Naive thymus-derived CD4-positive, alpha-beta T cell (primary cell): ENCODE measurements at regions of chr3 and their contacts with region 1.

Region 1: DNA sequence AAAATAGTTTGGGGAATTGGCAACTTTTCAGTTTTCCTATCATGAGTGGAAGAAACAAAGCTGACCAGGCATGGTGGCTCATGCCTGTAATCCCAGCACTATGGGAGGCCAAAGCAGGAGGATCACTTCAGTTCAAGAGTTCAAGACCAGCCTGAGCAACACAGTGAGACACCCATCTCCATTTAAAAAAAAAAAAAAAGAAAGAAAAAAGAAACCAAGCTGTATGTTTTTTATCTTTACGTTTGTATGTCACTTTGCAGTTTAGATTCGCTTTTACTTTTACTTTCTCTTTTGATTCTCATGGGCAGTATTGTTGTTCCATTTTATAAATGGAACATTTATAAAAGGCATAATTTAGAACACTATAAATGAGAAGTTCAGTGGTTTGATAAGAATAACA is 31.2 kb upstream of the TNIK start:
- DNase-seq: peak in 6 of 9 donors; percentile 14 to 57 (median 36)
- ATAC-seq: peak; percentile 26
- H3K4me3 ChIP-seq: peak overlapping the region; percentile 10
- H3K4me3 Mint-ChIP-seq: peak overlapping the region; percentile 36 to 82 (median 74)
- H3K27ac ChIP-seq: no peak overlapping the region
- H3K27ac Mint-ChIP-seq: peak overlapping the region; percentile 79 to 90 (median 85)
- H3K4me1 ChIP-seq: peaks cover 32 to 38% of the 10 kb centered on the region in 2 donors
- H3K4me1 Mint-ChIP-seq: peaks cover 15 to 55% (median 48%) of the 10 kb centered on the region in 7 donors
- H3K27me3 ChIP-seq: no peaks in the 10 kb centered on the region
- H3K27me3 Mint-ChIP-seq: no peaks in the 10 kb centered on the region

Region 2: DNA sequence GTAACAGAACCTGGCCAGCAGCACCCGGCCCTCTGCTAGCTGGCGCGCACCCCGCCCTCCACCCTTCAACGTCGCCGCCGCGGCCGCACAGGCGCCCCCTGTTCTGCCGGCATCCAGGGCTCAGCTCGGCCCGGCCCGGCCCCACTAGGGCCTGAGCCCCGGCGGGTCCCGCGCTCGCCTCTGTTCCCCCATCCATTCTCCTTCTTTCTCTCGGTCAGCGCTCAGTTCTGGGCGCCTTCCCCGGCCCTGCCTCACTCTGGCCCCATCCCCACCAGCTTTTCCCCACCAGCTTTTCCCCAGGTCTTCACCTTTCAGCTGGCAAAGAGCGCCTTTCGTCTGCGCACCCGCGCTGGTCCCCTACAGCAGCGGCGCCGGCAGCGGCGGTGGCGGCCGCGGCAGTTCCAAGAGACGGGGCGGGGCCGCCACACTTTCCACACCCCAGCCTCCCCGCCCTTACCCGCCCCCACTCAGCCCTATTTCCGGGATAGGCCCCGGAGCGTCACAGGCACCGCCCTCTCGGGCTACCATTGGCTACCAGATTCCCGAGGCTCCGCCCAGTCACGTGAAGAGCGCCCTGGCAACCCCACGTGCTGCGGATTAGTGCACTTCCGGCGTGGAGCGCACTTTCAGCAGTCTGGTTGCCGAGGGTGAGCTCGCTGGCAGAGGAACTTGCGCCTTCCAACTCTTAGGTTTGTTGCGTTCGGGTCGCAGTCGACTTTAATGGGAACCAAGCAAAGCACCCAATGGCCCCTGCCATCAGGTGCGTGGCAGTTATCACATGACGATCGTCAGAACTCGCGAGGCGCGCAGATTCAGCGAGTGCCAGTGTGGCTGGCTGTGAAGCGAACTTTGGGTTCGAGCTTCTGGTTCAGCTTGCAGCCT is 582.9 kb before region 1 on chr3 and contains the start of gene EIF5A2:
- CTCF ChIA-PET with region 1: no interaction called
- POLR2A ChIA-PET with region 1: no interaction called
- intact Hi-C with region 1: loop called in 1 of 2 experiments (anchors 10 kb)
- DNase-seq: peak; percentile 87 to 97 (median 94)
- ATAC-seq: peak; percentile 98
- H3K4me3 ChIP-seq: peak within 1 kb of the TSS; percentile 50
- H3K4me3 Mint-ChIP-seq: peak within 1 kb of the TSS; percentile 90 to 98 (median 96)
- H3K27ac ChIP-seq: peak within 1 kb of the TSS; percentile 68
- H3K27ac Mint-ChIP-seq: peak within 1 kb of the TSS; percentile 89 to 96 (median 94)
- H3K4me1 ChIP-seq: peaks cover 15 to 16% of the 10 kb centered on the region in 2 donors
- H3K4me1 Mint-ChIP-seq: peaks cover 0 to 31% (median 22%) of the 10 kb centered on the region in 7 donors
- H3K27me3 ChIP-seq: no peaks in the 10 kb centered on the region
- H3K27me3 Mint-ChIP-seq: peaks cover 0 to 19% (median 0%) of the 10 kb centered on the region in 5 donors
- total RNA-seq, gene EIF5A2: 5.5 to 9.8 (median 7.4) TPM

Region 3: GRCh38 chr3:171468296-171468906 is 23.0 kb before region 1 on chr3:
- CTCF ChIA-PET with region 1: no interaction called
- POLR2A ChIA-PET with region 1: no interaction called
- intact Hi-C with region 1: no loop called
- DNase-seq: no peak
- ATAC-seq: no peak
- H3K4me3 ChIP-seq: no peak overlapping the region
- H3K4me3 Mint-ChIP-seq: no peak overlapping the region
- H3K27ac ChIP-seq: no peak overlapping the region
- H3K27ac Mint-ChIP-seq: peak overlapping the region in 1 of 9 donors; percentile 31
- H3K4me1 ChIP-seq: no peaks in the 10 kb centered on the region
- H3K4me1 Mint-ChIP-seq: peaks cover 0 to 3% (median 0%) of the 10 kb centered on the region in 7 donors
- H3K27me3 ChIP-seq: no peaks in the 10 kb centered on the region
- H3K27me3 Mint-ChIP-seq: peaks cover 0 to 2% (median 0%) of the 10 kb centered on the region in 5 donors

Region 4: GRCh38 chr3:171480526-171480925 is 10.8 kb before region 1 on chr3:
- CTCF ChIA-PET with region 1: interaction called, 4 read pairs
- POLR2A ChIA-PET with region 1: interaction called, 5 read pairs
- intact Hi-C with region 1: loop called (anchors 1 kb)
- DNase-seq: peak in 4 of 9 donors; percentile 28 to 40 (median 36)
- ATAC-seq: peak; percentile 82
- H3K4me3 ChIP-seq: no peak overlapping the region
- H3K4me3 Mint-ChIP-seq: peak overlapping the region in 7 of 10 donors; percentile 32 to 63 (median 49)
- H3K27ac ChIP-seq: no peak overlapping the region
- H3K27ac Mint-ChIP-seq: peak overlapping the region; percentile 39 to 91 (median 60)
- H3K4me1 ChIP-seq: peaks cover 11 to 12% of the 10 kb centered on the region in 2 donors
- H3K4me1 Mint-ChIP-seq: peaks cover 8 to 21% (median 11%) of the 10 kb centered on the region in 7 donors
- H3K27me3 ChIP-seq: no peaks in the 10 kb centered on the region
- H3K27me3 Mint-ChIP-seq: peaks cover 0 to 2% (median 0%) of the 10 kb centered on the region in 5 donors

Region 5: GRCh38 chr3:171531716-171532115 is 40.4 kb after region 1 on chr3:
- CTCF ChIA-PET with region 1: no interaction called
- POLR2A ChIA-PET with region 1: no interaction called
- intact Hi-C with region 1: loop called in 1 of 2 experiments (anchors 5 kb)
- DNase-seq: no peak
- ATAC-seq: no peak
- H3K4me3 ChIP-seq: no peak overlapping the region
- H3K4me3 Mint-ChIP-seq: no peak overlapping the region
- H3K27ac ChIP-seq: no peak overlapping the region
- H3K27ac Mint-ChIP-seq: no peak overlapping the region
- H3K4me1 ChIP-seq: no peaks in the 10 kb centered on the region
- H3K4me1 Mint-ChIP-seq: no peaks in the 10 kb centered on the region
- H3K27me3 ChIP-seq: no peaks in the 10 kb centered on the region
- H3K27me3 Mint-ChIP-seq: no peaks in the 10 kb centered on the region

Region 6: DNA sequence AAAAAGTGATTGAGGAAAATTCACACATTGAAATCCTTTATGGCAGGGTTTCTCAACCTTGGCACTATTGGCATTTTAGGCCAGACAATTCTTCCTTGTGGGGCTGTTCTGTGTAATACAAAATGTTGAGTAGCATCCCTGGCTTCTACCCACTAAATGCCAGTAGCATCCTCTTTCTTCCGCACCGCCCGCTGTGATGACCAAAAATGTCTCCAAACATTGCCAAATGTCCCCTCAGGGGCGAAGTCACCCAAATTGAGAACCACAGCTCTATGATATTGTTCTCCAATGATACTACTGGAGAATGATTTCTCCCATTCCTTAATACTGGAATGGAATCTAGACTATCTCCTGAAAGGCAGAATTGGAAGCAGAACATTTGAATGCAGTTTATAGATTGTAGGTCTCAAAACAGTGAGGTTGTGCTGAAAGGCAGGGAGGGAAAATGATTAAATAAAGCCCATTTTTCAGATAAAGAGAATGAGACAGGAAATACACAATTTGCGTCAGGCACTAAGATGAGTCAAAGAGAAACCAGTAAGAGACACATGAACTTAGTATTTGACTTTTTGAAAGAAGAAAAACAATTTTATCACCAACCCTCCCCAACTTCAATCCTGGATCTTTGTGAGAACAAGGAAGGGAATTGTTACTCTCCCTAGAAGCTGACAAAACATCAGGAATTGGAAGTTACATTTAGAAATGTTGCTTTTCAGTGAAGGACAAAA is 70.4 kb after region 1 on chr3:
- CTCF ChIA-PET with region 1: no interaction called
- POLR2A ChIA-PET with region 1: no interaction called
- intact Hi-C with region 1: loop called in 1 of 2 experiments (anchors 1 kb)
- DNase-seq: peak in 1 of 9 donors; percentile 4
- ATAC-seq: no peak
- H3K4me3 ChIP-seq: no peak overlapping the region
- H3K4me3 Mint-ChIP-seq: peak overlapping the region in 4 of 10 donors; percentile 8 to 83 (median 14)
- H3K27ac ChIP-seq: no peak overlapping the region
- H3K27ac Mint-ChIP-seq: peak overlapping the region in 7 of 9 donors; percentile 29 to 97 (median 65)
- H3K4me1 ChIP-seq: peaks cover 1 to 4% of the 10 kb centered on the region in 2 donors
- H3K4me1 Mint-ChIP-seq: peaks cover 8 to 69% (median 16%) of the 10 kb centered on the region in 7 donors
- H3K27me3 ChIP-seq: no peaks in the 10 kb centered on the region
- H3K27me3 Mint-ChIP-seq: no peaks in the 10 kb centered on the region

Region 7: DNA sequence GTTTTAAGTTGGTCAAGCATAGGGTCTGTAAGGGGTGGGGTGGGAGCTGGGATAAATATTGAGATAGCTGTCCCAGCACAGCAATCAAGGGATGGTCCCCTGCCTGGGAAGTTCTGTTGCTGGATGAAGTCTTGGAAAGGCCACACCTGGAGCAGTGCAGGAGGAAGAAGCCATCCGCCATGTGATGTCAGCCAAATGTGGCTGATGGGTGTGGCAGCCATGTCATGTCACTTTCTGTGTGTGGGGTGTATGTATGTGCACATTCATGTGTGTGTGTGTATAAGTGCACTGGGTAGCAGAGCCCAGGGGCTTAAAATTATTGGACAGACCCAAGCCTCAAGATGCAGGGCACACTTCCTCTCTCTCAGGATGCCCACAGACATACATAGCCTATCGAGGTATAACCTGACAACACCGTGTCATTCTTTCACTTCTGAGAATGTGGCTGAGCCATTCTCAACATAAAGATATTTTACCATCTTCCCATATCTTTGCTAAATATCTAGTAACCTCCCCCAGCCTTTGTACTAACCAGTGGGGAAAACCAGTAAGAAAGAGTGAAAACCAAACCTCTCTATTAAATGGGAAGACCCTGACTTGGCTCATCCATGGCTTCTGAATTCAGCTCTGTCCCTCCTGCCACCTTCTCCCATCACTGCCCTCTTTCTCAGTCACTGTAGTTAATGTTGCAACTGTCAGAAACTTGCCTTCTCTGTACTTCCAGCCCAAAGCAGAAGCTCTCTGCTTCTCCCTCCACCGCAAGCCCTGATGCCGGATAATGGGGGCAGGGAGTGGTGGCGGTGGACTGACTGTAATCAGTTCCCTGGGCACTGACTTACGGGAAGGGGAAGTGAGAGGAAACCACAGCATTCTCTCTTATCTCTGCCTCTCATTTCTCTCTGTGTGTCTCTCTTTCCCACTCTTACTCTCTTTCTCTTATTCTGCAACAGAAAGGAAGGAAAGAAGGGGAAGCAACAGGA is 1020.7 kb after region 1 on chr3:
- CTCF ChIA-PET with region 1: no interaction called
- POLR2A ChIA-PET with region 1: no interaction called
- intact Hi-C with region 1: loop called in 1 of 2 experiments (anchors 10 kb)
- DNase-seq: peak in 7 of 9 donors; percentile 28 to 76 (median 48)
- ATAC-seq: peak; percentile 87
- H3K4me3 ChIP-seq: peak overlapping the region; percentile 2
- H3K4me3 Mint-ChIP-seq: peak overlapping the region; percentile 62 to 93 (median 80)
- H3K27ac ChIP-seq: peak overlapping the region; percentile 61
- H3K27ac Mint-ChIP-seq: peak overlapping the region; percentile 88 to 100 (median 93)
- H3K4me1 ChIP-seq: peaks cover 52 to 56% of the 10 kb centered on the region in 2 donors
- H3K4me1 Mint-ChIP-seq: peaks cover 65 to 91% (median 84%) of the 10 kb centered on the region in 7 donors
- H3K27me3 ChIP-seq: no peaks in the 10 kb centered on the region
- H3K27me3 Mint-ChIP-seq: no peaks in the 10 kb centered on the region